B cell (primary cell): ENCODE measurements at regions of chr19 and their contacts with region 1.

Region 1: DNA sequence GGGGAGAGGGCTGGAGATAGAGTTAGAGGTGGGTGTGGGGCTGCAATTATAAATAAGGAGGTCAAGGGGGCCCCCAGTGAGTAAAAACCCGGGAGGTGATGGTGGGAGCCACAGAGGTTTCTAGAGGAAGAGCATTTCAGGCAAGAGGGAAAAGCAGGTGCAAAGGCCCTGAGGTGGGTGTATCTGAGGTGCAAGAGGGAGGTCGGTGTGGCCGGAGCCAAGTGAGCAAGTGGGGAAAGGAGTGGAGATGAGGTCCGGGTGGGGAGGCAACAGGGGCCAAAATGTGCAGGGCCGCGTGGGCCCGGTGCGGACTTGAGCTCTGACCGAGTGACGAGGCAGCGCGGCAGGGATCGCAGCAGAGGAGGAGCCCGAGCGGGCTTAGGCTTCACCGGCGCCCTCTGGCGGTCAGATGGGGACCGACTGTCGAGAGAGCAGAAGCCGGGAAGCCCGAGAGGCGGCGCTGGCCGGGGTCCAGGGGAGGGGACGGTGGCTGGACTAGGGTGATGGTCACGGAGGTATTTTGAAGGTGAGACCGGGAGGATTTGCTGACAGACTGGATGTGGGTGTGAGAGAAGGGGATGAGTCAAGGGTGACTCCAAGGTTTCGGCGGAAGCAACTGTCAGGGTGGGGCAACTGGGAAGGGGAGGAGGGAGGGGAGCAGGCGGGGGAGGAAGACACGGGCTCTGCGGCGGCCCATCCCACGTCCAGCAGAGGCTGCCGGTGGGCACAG is 17.7 kb upstream of the SPACA4 start:
- DNase-seq: peak; percentile 89
- ATAC-seq: peak; percentile 91
- H3K4me3 ChIP-seq: peak overlapping the region in 4 of 5 experiments; percentile 14 to 56 (median 48)
- H3K4me3 Mint-ChIP-seq: peak overlapping the region; percentile 82
- H3K27ac ChIP-seq: no peak overlapping the region
- H3K27ac Mint-ChIP-seq: no peak overlapping the region
- H3K4me1 ChIP-seq: peaks cover 4 to 15% of the 10 kb centered on the region in 2 donors
- H3K4me1 Mint-ChIP-seq: peaks cover 12% of the 10 kb centered on the region
- H3K27me3 ChIP-seq: peaks cover 0 to 7% (median 4%) of the 10 kb centered on the region in 4 experiments
- H3K27me3 Mint-ChIP-seq: peaks cover 14% of the 10 kb centered on the region
- CTCF ChIP-seq: peak; percentile 94

Region 2: GRCh38 chr19:48271531-48272151 is 317.2 kb before region 1 on chr19:
- CTCF ChIA-PET with region 1: interaction called, 35 read pairs
- POLR2A ChIA-PET with region 1: no interaction called
- intact Hi-C with region 1: loop called (anchors 1 kb)
- DNase-seq: peak; percentile 53
- ATAC-seq: peak; percentile 55
- H3K4me3 ChIP-seq: peak overlapping the region; percentile 55 to 82 (median 74)
- H3K4me3 Mint-ChIP-seq: peak overlapping the region; percentile 97
- H3K27ac ChIP-seq: no peak overlapping the region
- H3K27ac Mint-ChIP-seq: peak overlapping the region; percentile 87
- H3K4me1 ChIP-seq: peaks cover 3 to 15% of the 10 kb centered on the region in 2 donors
- H3K4me1 Mint-ChIP-seq: peaks cover 13% of the 10 kb centered on the region
- H3K27me3 ChIP-seq: peaks cover 0 to 2% (median 0%) of the 10 kb centered on the region in 4 experiments
- H3K27me3 Mint-ChIP-seq: peaks cover 3% of the 10 kb centered on the region
- CTCF ChIP-seq: no peak

Region 3: DNA sequence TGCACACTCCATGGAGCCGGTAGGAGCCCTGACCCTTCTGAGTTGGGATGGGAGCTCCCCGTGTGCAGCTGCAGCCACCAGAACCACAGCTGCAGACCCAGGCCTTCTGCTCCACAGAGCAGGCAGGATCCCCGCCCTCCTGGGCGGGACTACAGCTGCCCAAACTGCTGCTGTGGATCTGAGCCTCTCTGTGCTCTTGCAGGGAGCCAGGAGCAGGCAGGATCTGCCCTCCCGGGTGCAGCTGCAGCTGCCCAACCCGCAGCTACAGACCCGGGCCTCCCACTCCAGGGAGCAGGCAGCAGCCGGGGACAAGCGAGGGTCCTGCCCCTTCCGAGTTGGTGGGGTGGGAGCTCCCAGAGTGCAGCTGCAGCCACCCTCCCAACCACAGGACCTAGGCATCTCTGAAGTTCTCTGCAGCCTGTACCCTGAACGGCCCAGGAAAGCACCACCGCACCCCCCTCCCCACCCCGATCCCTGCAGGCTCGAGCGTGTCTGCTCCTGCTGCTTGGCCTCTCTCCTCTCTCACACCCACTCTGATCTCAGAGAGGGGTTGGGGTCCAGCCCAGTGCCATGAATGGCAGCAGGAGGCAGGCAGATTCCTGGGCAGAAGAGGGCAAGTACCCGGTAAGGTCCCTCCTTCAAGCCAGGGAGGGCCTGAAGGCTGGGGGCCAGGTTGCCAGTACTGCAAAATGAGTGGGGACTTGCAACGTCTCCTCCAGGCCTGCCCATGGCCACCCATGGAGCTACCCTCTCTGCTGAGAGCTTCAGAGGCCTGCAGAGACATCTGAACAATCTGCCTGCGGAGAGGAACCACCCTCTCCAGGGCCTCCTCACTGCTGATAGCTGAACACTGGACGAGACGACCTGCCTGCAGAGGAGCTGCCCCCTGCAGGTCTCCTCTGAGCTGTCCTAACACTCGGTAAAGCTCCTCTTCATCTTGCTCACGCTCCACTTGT is 279.9 kb before region 1 on chr19:
- CTCF ChIA-PET with region 1: interaction called, 8 read pairs
- POLR2A ChIA-PET with region 1: no interaction called
- intact Hi-C with region 1: loop called (anchors 1 kb)
- DNase-seq: no peak
- ATAC-seq: no peak
- H3K4me3 ChIP-seq: no peak overlapping the region
- H3K4me3 Mint-ChIP-seq: no peak overlapping the region
- H3K27ac ChIP-seq: no peak overlapping the region
- H3K27ac Mint-ChIP-seq: no peak overlapping the region
- H3K4me1 ChIP-seq: no peaks in the 10 kb centered on the region
- H3K4me1 Mint-ChIP-seq: no peaks in the 10 kb centered on the region
- H3K27me3 ChIP-seq: no peaks in the 10 kb centered on the region
- H3K27me3 Mint-ChIP-seq: peaks cover 13% of the 10 kb centered on the region
- CTCF ChIP-seq: no peak

Region 4: GRCh38 chr19:48351341-48351752 is 237.5 kb before region 1 on chr19:
- CTCF ChIA-PET with region 1: interaction called, 12 read pairs
- POLR2A ChIA-PET with region 1: no interaction called
- intact Hi-C with region 1: no loop called
- DNase-seq: peak; percentile 76
- ATAC-seq: peak; percentile 79
- H3K4me3 ChIP-seq: no peak overlapping the region
- H3K4me3 Mint-ChIP-seq: no peak overlapping the region
- H3K27ac ChIP-seq: no peak overlapping the region
- H3K27ac Mint-ChIP-seq: peak overlapping the region; percentile 22
- H3K4me1 ChIP-seq: peaks cover 0 to 5% of the 10 kb centered on the region in 2 donors
- H3K4me1 Mint-ChIP-seq: peaks cover 3% of the 10 kb centered on the region
- H3K27me3 ChIP-seq: no peaks in the 10 kb centered on the region
- H3K27me3 Mint-ChIP-seq: no peaks in the 10 kb centered on the region
- CTCF ChIP-seq: peak; percentile 74

Region 5: DNA sequence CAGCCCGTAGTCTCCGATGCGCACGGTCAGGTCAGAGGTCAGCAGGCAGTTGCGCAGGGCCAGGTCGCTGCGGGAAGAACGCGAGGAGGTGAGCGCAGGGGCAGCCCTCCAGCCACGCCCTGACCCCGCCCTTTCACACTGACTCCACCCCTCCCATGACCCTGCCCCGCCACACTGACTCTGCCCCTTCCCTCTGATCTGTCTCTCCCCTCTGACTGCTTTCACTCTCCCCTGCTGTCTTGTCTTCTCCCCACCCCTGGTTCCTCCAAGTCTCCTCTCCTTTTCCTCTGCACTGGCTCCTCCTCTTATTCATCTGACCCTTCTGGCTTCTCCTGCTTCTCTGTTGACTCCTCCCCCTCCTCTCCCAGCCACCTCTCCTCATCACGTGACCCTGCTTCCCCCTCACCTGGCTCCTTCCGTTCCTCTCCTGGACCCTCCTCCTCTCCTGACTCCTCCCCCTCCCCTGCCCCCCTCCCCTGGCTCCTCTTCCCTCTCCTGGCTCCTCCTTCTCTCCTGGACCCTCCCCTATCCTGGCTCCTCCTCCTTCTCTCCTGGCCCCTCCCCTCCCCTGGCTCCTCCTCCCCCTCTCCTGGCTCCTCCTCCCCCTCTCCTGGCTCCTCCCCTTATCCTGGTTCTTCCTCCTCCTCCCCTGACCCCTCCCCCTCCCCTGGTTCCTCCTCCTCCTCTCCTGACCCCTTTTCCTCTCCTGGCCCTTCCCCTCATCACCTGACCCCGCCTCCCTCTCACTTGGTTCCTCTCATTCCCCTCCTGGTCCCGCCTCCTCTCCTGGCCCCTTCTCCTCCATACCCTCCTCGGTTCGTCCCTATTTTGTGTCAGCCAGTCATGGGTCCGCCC is 87.1 kb before region 1 on chr19:
- CTCF ChIA-PET with region 1: interaction called, 40 read pairs
- POLR2A ChIA-PET with region 1: interaction called, 3 read pairs
- intact Hi-C with region 1: loop called (anchors 2 kb)
- DNase-seq: no peak
- ATAC-seq: peak; percentile 59
- H3K4me3 ChIP-seq: peak overlapping the region in 3 of 5 experiments; percentile 12 to 25 (median 17)
- H3K4me3 Mint-ChIP-seq: peak overlapping the region; percentile 49
- H3K27ac ChIP-seq: peak overlapping the region in 1 of 2 donors; percentile 33
- H3K27ac Mint-ChIP-seq: peak overlapping the region; percentile 24
- H3K4me1 ChIP-seq: peaks cover 33 to 35% of the 10 kb centered on the region in 2 donors
- H3K4me1 Mint-ChIP-seq: peaks cover 21% of the 10 kb centered on the region
- H3K27me3 ChIP-seq: peaks cover 0 to 36% (median 13%) of the 10 kb centered on the region in 4 experiments
- H3K27me3 Mint-ChIP-seq: peaks cover 9% of the 10 kb centered on the region
- CTCF ChIP-seq: no peak

Region 6: DNA sequence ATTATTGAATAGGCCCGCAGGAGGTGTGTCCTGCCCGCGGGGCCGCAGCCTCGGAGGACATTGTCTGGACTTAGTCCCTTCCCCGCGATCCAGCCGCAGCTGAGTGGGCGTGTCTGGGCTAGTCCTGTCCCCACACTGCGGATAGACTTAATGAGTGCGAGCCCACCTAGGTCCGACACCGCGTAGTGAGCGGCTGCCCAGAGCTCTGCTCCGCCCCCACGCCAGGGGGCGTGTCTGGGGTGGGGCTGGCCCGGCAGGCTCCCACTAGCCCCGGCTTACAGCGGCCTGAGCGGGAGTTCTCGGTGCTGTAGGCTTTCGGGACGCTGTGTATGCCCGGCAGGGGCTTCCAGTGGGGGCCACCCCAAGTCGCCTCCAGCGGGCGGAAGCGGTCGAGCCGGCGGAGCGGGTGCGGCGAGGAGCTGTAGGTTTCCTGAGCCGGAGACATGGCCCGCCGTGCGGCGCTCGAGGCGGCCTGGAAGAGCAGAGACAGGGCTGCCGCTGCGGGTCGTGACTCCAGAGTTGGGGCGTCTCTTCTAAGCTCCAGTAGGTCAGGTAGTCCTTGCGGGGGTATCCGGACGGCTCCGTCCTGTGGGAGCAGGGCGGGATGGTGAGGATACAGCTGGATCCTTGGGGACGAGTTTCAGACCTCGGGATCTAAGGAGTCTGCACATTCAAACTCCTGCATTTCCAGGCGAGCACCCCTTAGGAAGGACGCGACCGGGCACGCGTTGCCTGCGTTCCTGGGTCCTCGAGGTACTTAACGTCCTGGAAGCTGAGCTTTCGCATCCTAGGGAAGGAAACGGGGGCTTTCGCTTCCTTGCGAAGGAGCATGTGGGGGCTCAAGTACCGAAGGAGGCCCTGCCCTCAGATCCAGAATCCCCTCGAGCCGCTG is 467.4 kb after region 1 on chr19:
- CTCF ChIA-PET with region 1: no interaction called
- POLR2A ChIA-PET with region 1: no interaction called
- intact Hi-C with region 1: no loop called
- DNase-seq: peak; percentile 74
- ATAC-seq: peak; percentile 84
- H3K4me3 ChIP-seq: peak overlapping the region in 4 of 5 experiments; percentile 51 to 77 (median 56)
- H3K4me3 Mint-ChIP-seq: peak overlapping the region; percentile 90
- H3K27ac ChIP-seq: no peak overlapping the region
- H3K27ac Mint-ChIP-seq: no peak overlapping the region
- H3K4me1 ChIP-seq: peaks cover 17 to 28% of the 10 kb centered on the region in 2 donors
- H3K4me1 Mint-ChIP-seq: peaks cover 22% of the 10 kb centered on the region
- H3K27me3 ChIP-seq: peaks cover 0 to 49% (median 20%) of the 10 kb centered on the region in 4 experiments
- H3K27me3 Mint-ChIP-seq: peaks cover 28% of the 10 kb centered on the region
- CTCF ChIP-seq: peak; percentile 46